GM18951 (cell line): ENCODE measurements at regions of chr2 and their contacts with region 1.

Region 1: DNA sequence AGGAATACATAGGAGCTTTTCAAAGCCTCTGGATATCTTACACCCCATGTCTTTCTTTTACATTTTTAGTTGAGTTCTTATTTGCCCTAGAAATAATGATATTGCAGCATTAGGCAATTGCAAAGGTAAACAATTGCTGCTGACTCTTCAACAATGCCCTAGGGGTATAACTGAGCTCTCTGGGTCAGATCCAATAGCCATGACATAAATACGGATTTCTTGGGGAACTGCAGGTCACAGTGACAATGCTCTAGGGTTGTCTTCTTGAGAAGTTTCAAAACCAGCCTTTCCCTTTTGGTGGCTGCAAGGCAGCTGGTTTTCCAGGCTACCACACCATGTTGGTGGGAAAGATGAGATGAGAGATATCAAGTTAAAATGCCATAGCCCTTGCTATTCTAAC is 16.5 kb upstream of the OR6B3 start:
- POLR2A ChIP-seq: no peak

Region 2: GRCh38 chr2:240143801-240144648 is 74.2 kb after region 1 on chr2:
- in situ Hi-C with region 1: loop called (anchors 10 kb)
- POLR2A ChIP-seq: no peak